ENCODE measurements at regions of chr12 and their contacts with region 1.

Region 1: DNA sequence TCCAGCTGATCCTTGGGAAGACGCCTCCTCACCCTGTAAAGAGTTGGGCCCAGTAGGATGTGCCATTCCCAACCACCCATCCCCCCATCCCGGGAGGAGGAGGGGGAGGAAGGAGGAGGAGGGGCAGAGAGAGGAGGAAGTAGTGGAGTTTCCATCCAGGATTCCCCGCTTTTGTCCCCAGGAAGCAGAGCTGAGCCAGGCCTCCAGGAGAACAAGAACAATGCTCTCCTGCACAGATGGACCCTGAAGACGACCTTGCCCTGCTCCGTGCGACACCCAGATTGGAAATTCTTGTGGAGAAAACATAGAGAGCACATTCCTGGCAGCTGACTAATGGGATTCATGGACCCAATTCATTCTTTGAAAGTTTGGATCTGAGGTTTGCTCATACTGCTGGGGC is 132.3 kb upstream of the CRY1 start:
- DNase-seq: no peak
- ATAC-seq: no peak
- H3K4me3 ChIP-seq: no peak overlapping the region
- H3K4me3 Mint-ChIP-seq: no peak overlapping the region
- H3K27ac ChIP-seq: no peak overlapping the region
- H3K27ac Mint-ChIP-seq: no peak overlapping the region
- H3K4me1 ChIP-seq: no peaks in the 10 kb centered on the region
- H3K4me1 Mint-ChIP-seq: no peaks in the 10 kb centered on the region
- H3K27me3 ChIP-seq: peaks cover 0 to 3% of the 10 kb centered on the region in 2 experiments
- H3K27me3 Mint-ChIP-seq: peaks cover 14 to 15% of the 10 kb centered on the region in 2 donors

Region 2: GRCh38 chr12:107033758-107034739 is 191.6 kb before region 1 on chr12:
- CTCF ChIA-PET with region 1: interaction called in 1 of 2 experiments, 10 read pairs
- POLR2A ChIA-PET with region 1: no interaction called
- DNase-seq: no peak
- ATAC-seq: no peak
- H3K4me3 ChIP-seq: no peak overlapping the region
- H3K4me3 Mint-ChIP-seq: no peak overlapping the region
- H3K27ac ChIP-seq: no peak overlapping the region
- H3K27ac Mint-ChIP-seq: no peak overlapping the region
- H3K4me1 ChIP-seq: peaks cover 0 to 4% of the 10 kb centered on the region in 2 experiments
- H3K4me1 Mint-ChIP-seq: peaks cover 39 to 53% (median 46%) of the 10 kb centered on the region in 3 donors
- H3K27me3 ChIP-seq: no peaks in the 10 kb centered on the region
- H3K27me3 Mint-ChIP-seq: no peaks in the 10 kb centered on the region

Region 3: GRCh38 chr12:107057071-107057818 is 168.4 kb before region 1 on chr12:
- CTCF ChIA-PET with region 1: no interaction called
- POLR2A ChIA-PET with region 1: no interaction called
- DNase-seq: no peak
- ATAC-seq: no peak
- H3K4me3 ChIP-seq: no peak overlapping the region
- H3K4me3 Mint-ChIP-seq: no peak overlapping the region
- H3K27ac ChIP-seq: no peak overlapping the region
- H3K27ac Mint-ChIP-seq: peak overlapping the region in 1 of 2 donors; percentile 22
- H3K4me1 ChIP-seq: no peaks in the 10 kb centered on the region
- H3K4me1 Mint-ChIP-seq: peaks cover 14 to 25% (median 14%) of the 10 kb centered on the region in 3 donors
- H3K27me3 ChIP-seq: no peaks in the 10 kb centered on the region
- H3K27me3 Mint-ChIP-seq: no peaks in the 10 kb centered on the region

Region 4: DNA sequence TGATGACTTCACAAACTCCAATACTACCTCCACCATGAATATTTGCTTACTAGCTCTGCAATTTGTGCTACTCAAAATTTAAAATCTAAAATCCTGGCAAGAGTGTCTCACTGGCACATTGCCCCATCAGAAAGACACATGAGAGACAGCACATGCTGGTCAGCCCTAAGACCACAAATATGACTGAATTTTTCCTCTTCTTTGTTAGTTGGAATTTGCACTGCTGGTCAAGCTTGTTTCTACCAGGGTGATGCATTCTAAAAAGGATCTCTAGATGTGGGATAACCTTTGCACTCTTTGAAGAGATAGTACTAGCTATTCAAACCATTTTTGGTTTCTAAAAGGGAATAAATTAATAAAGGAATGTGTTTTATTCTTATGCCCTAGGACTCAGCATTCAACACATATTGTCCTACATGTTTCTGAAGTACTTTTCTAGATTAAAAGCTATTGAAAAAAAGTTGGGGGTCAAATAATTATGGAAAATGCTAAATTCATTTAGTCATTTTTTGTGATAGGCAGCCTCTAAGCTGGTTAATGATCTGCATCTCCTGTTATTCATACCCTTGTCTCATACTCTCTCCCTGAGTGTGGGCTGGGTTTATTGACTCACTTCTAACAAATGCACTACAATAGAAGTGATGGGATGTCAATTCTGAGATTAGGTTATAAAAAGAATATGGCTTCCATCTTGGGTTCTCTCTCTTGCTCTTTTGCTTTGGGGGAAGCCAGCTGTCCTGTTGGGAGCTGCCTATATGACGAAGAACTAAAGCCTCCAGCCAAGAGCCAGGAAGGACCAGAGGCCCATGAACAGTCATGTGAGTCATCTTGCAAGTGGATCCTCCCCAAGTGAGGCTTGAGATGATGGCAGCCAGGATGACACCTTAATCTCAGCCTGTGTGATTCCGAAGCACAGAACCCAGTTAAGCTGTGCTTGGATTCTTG is 79.2 kb after region 1 on chr12:
- CTCF ChIA-PET with region 1: no interaction called
- POLR2A ChIA-PET with region 1: no interaction called
- DNase-seq: no peak
- ATAC-seq: no peak
- H3K4me3 ChIP-seq: no peak overlapping the region
- H3K4me3 Mint-ChIP-seq: no peak overlapping the region
- H3K27ac ChIP-seq: no peak overlapping the region
- H3K27ac Mint-ChIP-seq: no peak overlapping the region
- H3K4me1 ChIP-seq: peaks cover 6 to 8% of the 10 kb centered on the region in 2 experiments
- H3K4me1 Mint-ChIP-seq: peaks cover 14 to 19% (median 18%) of the 10 kb centered on the region in 3 donors
- H3K27me3 ChIP-seq: no peaks in the 10 kb centered on the region
- H3K27me3 Mint-ChIP-seq: peaks cover 0 to 3% of the 10 kb centered on the region in 2 donors

Region 5: GRCh38 chr12:107607464-107608392 is 382.1 kb after region 1 on chr12:
- CTCF ChIA-PET with region 1: no interaction called
- POLR2A ChIA-PET with region 1: interaction called in 1 of 2 experiments, 10 read pairs
- DNase-seq: peak; percentile 44 to 88 (median 75)
- ATAC-seq: peak; percentile 70 to 73 (median 71)
- H3K4me3 ChIP-seq: no peak overlapping the region
- H3K4me3 Mint-ChIP-seq: no peak overlapping the region
- H3K27ac ChIP-seq: no peak overlapping the region
- H3K27ac Mint-ChIP-seq: no peak overlapping the region
- H3K4me1 ChIP-seq: no peaks in the 10 kb centered on the region
- H3K4me1 Mint-ChIP-seq: peaks cover 0 to 2% (median 0%) of the 10 kb centered on the region in 3 donors
- H3K27me3 ChIP-seq: no peaks in the 10 kb centered on the region
- H3K27me3 Mint-ChIP-seq: no peaks in the 10 kb centered on the region

Measured in T-cell (primary cell).